Natural killer cell (primary cell): ENCODE measurements at regions of chr7 and their contacts with region 1.

Region 1: DNA sequence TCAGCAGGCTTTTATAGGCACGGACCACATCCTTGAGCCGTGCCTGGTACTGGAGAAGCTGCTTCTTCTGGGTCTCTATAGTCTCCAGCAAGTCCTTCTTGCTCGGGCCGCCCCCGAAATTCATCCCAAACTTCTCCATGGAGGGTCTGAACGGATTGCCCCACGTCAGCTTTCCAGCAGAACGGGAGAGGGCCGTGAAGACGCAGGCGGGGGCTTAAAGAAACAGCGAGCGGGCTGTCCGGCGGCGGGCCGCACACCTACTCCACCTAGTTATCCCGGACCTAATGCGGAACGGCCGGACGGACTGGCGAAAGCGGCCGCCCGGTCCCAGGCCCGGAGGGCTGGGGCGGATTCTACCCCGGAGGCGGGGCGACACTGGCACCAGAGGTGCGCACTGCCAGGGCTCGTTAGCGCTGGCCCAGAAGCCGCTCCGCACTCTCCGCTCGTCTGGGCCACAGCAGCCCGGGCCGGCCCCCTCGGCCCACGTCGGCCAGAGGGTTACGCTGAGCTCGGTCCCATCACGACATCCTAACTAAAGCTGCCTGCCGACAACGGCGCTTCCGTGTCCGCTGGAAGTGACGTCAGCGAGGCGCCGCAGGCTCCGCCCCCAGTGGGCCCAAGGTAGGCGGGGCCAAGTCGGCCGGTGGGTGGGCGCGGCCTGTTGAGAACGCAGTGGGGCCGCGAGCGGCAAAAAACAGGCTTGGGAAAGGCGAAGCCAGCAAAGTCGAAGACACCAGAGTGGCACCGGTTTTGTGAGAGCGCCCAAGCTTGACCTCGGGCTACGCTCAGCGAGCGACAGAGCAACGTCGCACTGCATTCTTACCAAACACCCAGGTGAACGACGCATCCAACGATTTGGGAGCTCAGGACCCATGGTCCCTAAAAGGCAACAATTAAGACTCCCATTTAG is at the start of gene GCC1:
- DNase-seq: peak; percentile 96 to 98
- ATAC-seq: peak; percentile 81 to 93 (median 83)
- H3K4me3 ChIP-seq: peak within 1 kb of the TSS; percentile 95
- H3K4me3 Mint-ChIP-seq: peak within 1 kb of the TSS; percentile 95
- H3K27ac ChIP-seq: peak within 1 kb of the TSS; percentile 89
- H3K27ac Mint-ChIP-seq: peak within 1 kb of the TSS; percentile 86 to 94
- H3K4me1 ChIP-seq: peaks cover 47% of the 10 kb centered on the region
- H3K4me1 Mint-ChIP-seq: peaks cover 69 to 74% of the 10 kb centered on the region in 2 donors
- H3K27me3 ChIP-seq: no peaks in the 10 kb centered on the region
- H3K27me3 Mint-ChIP-seq: no peaks in the 10 kb centered on the region
- CTCF ChIP-seq: no peak
- total RNA-seq, gene GCC1: 26.1 to 32.1 (median 28.7) TPM

Region 2: GRCh38 chr7:127392566-127393367 is 192.5 kb before region 1 on chr7 and contains the start of gene ZNF800:
- intact Hi-C with region 1: loop called (anchors 5 kb)
- DNase-seq: peak; percentile 85 to 93
- ATAC-seq: peak; percentile 80 to 93 (median 85)
- H3K4me3 ChIP-seq: peak within 1 kb of the TSS; percentile 88
- H3K4me3 Mint-ChIP-seq: peak within 1 kb of the TSS; percentile 98
- H3K27ac ChIP-seq: peak within 1 kb of the TSS; percentile 96
- H3K27ac Mint-ChIP-seq: peak within 1 kb of the TSS; percentile 96 to 97
- H3K4me1 ChIP-seq: peaks cover 15% of the 10 kb centered on the region
- H3K4me1 Mint-ChIP-seq: peaks cover 43 to 56% of the 10 kb centered on the region in 2 donors
- H3K27me3 ChIP-seq: no peaks in the 10 kb centered on the region
- H3K27me3 Mint-ChIP-seq: no peaks in the 10 kb centered on the region
- CTCF ChIP-seq: no peak
- total RNA-seq, gene ZNF800: 93.3 to 107 (median 101) TPM

Region 3: DNA sequence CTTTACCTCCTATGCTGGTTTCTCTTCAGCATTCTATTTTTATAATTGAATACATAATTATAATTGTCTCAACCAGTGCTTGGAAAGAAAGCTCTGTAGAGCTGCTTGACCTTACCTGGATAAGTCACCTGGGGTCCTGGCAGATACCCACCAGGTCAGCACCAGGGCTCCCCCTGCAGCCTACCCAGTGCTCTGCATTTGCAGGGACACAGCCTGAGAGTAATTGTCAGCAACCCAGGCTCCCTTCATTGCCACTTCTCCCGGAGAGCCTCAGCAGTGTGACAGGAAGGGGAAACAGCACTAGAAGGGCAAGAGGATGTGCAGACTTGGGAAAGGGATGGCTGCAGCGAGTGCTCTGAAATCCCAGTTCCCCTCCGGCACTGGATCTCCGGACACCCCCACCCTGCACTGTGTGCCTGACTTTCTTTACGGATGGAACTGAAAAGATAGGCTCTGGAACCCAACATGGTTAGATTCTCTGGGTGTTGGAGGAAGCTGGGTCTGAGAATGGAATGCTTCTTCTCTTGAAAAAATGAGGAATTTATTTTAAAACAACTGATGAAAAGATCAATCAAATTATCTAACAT is 44.1 kb after region 1 on chr7:
- intact Hi-C with region 1: no loop called
- DNase-seq: peak in 1 of 2 donors; percentile 44
- ATAC-seq: peak; percentile 37 to 54 (median 50)
- H3K4me3 ChIP-seq: no peak overlapping the region
- H3K4me3 Mint-ChIP-seq: no peak overlapping the region
- H3K27ac ChIP-seq: no peak overlapping the region
- H3K27ac Mint-ChIP-seq: no peak overlapping the region
- H3K4me1 ChIP-seq: no peaks in the 10 kb centered on the region
- H3K4me1 Mint-ChIP-seq: no peaks in the 10 kb centered on the region
- H3K27me3 ChIP-seq: no peaks in the 10 kb centered on the region
- H3K27me3 Mint-ChIP-seq: peaks cover 29 to 35% of the 10 kb centered on the region in 2 donors
- CTCF ChIP-seq: peak; percentile 13

Region 4: DNA sequence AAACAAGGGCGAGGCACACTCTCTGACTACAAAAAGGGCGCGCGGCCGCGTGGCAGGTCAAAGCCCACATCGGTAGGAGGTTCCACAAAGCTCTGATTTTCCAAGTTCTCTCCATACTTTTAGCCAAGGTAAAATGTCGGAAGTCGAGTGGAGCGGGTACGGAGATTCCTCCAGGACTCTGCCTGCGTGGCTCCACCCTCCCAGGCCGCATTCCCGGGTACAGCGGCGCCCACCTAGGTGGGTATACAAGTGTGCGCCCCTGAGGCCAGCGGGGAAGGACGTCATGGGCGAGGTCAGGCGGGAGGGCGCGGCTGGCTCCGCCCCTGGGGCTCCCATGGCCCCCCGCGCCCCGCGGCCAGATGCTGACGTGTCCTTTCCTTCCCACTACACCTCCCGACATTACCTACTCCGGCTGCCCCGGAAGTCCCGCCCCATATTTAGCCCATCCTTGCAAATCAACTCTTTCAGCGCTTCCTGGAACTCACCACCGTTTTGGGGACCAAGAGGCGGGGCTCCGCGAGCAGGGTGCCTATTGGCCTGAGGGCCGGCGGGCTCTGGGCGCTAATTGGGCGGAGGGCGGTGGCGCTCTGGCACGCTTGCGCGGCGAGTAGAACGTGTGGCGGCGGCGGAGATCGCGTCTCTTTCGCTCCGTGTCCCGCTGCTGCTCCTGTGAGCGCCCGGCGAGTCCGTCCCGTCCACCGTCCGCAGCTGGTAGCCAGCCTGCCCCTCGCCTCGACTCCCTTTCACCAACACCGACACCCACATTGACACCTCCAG is 66.4 kb after region 1 on chr7 and contains the start of gene SND1:
- intact Hi-C with region 1: loop called (anchors 1 kb)
- DNase-seq: peak; percentile 95 to 99
- ATAC-seq: peak; percentile 92 to 98 (median 94)
- H3K4me3 ChIP-seq: peak within 1 kb of the TSS; percentile 94
- H3K4me3 Mint-ChIP-seq: peak within 1 kb of the TSS; percentile 99
- H3K27ac ChIP-seq: peak within 1 kb of the TSS; percentile 94
- H3K27ac Mint-ChIP-seq: no peak within 1 kb of the TSS
- H3K4me1 ChIP-seq: peaks cover 22% of the 10 kb centered on the region
- H3K4me1 Mint-ChIP-seq: peaks cover 45 to 59% of the 10 kb centered on the region in 2 donors
- H3K27me3 ChIP-seq: no peaks in the 10 kb centered on the region
- H3K27me3 Mint-ChIP-seq: peaks cover 0 to 9% of the 10 kb centered on the region in 2 donors
- CTCF ChIP-seq: no peak
- total RNA-seq, gene SND1: 149 to 188 (median 149) TPM